Ovary (tissue), 10 donors: ENCODE measurements at regions of chr11 and their contacts with region 1.

Region 1: GRCh38 chr11:133004369-133004768 is 527.9 kb downstream of the OPCML start:
- DNase-seq: no peak
- H3K4me3 ChIP-seq: no peak overlapping the region
- H3K27ac ChIP-seq: no peak overlapping the region
- H3K4me1 ChIP-seq: no peaks in the 10 kb centered on the region
- H3K27me3 ChIP-seq: no peaks in the 10 kb centered on the region
- CTCF ChIP-seq: no peak
- EP300 ChIP-seq: no peak
- POLR2A ChIP-seq: no peak

Region 2: GRCh38 chr11:132448334-132448995 is 555.9 kb before region 1 on chr11:
- intact Hi-C with region 1: no loop called
- DNase-seq: no peak
- H3K4me3 ChIP-seq: no peak overlapping the region
- H3K27ac ChIP-seq: no peak overlapping the region
- H3K4me1 ChIP-seq: no peaks in the 10 kb centered on the region
- H3K27me3 ChIP-seq: no peaks in the 10 kb centered on the region
- CTCF ChIP-seq: no peak
- EP300 ChIP-seq: no peak
- POLR2A ChIP-seq: no peak

Region 3: DNA sequence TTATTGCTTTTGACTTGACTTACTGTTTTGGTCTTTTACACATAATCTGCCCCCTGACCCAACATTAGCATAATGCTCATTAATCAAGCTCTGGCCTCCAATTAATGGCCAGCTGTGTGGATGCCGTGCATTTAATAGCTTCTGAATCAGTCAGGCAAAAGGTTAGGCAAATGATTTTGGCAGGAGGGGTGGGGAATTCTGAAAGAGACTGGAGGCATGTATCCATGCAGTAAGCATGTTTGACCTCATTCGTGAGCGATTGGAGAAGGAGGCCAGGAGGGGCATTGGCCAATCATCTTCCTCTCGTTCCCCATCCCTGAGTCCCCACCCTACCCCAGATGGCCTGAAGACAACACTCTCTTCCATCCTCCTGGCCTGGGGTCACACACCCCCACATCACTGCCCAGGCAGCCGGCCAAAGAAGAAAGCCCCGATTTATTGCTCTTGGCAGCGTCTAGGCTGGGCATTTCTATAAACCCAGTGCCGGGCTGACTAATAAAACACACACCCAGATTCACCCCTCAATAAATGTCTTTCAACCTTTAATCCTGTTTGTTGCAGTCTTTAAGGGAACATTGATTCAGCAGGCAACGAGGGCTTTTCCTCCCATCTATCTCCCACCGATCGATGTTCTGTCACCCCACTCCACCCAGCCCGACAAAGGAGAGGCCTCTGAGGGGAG is 377.9 kb after region 1 on chr11:
- intact Hi-C with region 1: loop called in 1 of 4 experiments (anchors 10 kb)
- DNase-seq: no peak
- H3K4me3 ChIP-seq: no peak overlapping the region
- H3K27ac ChIP-seq: no peak overlapping the region
- H3K4me1 ChIP-seq: no peaks in the 10 kb centered on the region
- H3K27me3 ChIP-seq: no peaks in the 10 kb centered on the region
- CTCF ChIP-seq: no peak
- EP300 ChIP-seq: no peak
- POLR2A ChIP-seq: no peak